Astrocyte of the cerebellum (primary cell): ENCODE measurements at regions of chr12 and their contacts with region 1.

Region 1: DNA sequence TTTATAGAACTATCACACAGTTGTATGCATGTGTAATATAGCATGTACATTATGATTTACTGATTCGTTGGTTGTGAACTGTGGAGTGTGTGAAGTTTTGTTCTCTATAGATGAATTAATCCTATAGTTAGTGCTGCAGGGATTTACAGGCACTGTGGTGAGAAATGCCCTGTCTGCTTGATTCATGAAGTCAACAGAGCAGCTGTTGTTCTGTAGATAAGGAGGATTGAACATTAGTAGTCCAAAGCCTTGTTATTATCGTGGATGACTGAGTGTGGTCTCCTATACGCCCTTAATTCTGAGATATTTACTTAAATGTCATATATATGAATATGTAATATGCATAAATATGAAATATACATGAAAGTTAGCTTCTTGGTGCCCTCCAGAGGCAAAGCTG is 98.3 kb downstream of the DNAH10 start:
- DNase-seq: no peak
- H3K4me3 ChIP-seq: no peak overlapping the region
- CTCF ChIP-seq: no peak

Region 2: GRCh38 chr12:123782997-123783792 is 77.2 kb before region 1 on chr12:
- in situ Hi-C with region 1: loop called (anchors 5 kb)
- DNase-seq: no peak
- H3K4me3 ChIP-seq: no peak overlapping the region
- CTCF ChIP-seq: no peak

Region 3: DNA sequence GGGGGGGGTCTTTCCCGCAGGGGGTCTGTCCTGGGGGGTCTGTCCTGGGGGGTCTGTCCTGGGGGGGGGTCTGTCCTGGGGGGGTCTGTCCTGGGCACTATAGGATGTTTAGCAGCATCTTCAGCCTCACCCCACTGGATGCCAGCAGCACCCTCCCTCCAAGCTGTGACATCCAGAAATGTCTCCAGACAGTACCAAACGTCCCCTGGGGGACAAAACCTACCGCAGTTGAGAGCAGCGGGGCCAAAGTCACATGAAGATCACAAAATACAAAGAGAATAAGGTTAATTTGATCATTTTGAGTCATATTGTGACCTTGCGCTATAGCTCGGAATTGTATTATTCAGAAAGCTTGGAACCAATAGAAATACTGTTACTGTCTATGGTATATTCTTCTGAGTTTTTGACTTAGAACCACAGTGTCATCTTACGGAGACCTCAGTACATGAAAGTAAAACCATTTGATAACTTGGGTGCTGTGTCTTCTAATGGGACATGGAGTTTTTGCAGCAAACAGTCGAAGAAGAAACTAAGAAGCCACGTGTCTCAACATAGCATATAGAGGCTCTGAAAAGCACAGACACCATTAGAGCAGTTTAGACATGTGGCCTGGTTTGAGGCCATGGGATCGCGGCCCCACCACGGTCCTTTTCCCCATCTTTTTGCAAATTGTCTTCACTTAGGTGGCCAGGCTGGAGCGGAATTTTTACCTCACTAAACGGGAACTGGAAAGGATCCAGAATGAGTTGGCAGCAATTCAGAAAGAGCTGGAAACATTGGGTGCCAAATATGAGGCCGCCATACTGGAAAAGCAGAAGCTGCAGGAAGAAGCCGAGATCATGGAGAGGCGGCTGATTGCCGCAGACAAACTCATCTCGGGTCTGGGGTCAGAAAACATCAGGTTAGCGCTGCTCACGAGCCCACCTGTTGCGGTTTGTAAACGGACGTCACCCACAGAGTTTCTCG is 52.3 kb after region 1 on chr12:
- in situ Hi-C with region 1: loop called (anchors 5 kb)
- DNase-seq: no peak
- H3K4me3 ChIP-seq: no peak overlapping the region
- CTCF ChIP-seq: no peak